SK-MEL-5 (cell line): ENCODE measurements at regions of chr20 and their contacts with region 1.

Region 1: GRCh38 chr20:49631061-49631788 is 63.3 kb upstream of the PTGIS start:
- DNase-seq: peak; percentile 32

Region 2: DNA sequence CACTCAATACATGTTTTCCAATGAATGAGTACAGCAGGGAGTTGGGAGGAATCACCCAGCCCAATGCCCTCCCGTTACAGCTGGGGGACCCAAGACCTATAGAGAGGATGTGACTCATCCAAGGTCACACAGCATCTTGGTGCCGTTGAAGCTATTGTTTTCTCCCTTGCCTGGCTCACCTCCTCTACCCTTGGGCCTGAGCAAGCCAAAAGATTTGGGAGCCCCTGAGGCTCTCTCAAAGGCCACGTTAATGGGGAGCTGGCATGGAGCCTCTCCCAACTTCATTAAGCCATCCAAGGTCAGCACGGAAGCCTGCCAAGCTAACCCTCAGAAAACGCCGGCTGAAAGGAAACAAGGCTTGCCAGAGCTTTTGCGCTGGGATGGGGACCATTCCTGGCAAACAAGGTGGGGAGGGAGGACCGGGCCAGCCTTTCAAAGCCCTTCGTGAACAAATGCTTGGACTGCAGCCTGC is 179.2 kb before region 1 on chr20:
- in situ Hi-C with region 1: no loop called
- DNase-seq: no peak

Region 3: DNA sequence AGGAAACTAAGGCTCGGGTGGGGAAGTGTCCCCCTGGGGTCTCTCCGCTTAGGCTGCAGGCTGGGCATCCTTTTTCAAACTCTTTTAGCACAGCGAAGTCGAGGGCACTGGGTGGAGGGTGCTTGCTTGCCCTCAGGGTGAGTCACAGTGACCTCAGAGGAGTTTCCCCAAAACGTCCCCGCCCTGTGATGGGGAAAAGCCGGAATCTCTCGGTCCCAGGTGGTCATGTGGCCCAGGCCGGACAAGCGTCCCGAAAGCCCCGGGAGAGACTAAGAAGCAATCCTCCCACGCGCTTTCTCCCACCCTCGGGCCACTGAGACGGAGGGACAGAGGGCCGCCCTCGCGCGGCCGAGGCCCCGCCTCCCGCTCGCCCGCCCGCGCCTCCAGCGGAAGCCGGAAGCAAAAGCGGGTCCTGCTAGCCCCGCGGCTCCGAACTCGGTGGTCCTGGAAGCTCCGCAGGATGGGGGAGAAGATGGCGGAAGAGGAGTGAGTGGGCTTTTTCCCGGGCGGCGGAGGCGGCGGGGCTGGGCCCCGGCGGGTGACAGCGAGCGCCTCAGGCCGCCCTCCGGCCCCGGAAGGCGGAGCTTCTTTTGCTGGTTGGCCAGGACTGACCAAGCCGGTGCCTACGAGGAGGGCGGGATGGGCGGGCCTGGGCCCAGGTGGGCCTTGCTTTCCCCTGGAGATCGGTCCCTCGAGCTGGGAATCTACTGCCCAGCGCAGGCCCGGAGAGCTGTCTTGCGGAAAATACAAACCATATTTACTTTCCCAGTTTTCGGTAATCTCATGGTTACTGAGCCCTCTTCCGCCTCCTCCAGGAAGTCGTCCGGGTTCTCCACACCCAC is 181.5 kb after region 1 on chr20 and contains the start of gene SLC9A8:
- in situ Hi-C with region 1: loop called (anchors 25 kb)
- DNase-seq: peak; percentile 84
- total RNA-seq, gene SLC9A8: 8.3 and 10.4 TPM in 2 replicates